Prostate gland (tissue), 2 donors: ENCODE measurements at regions of chr6 and their contacts with region 1.

Region 1: GRCh38 chr6:133923938-133924593 is 29.0 kb upstream of the TBPL1 start:
- DNase-seq: peak; percentile 76
- H3K4me3 ChIP-seq: no peak overlapping the region
- H3K27ac ChIP-seq: no peak overlapping the region
- H3K4me1 ChIP-seq: no peaks in the 10 kb centered on the region
- H3K27me3 ChIP-seq: no peaks in the 10 kb centered on the region
- CTCF ChIP-seq: peak; percentile 49 to 90 (median 82)
- POLR2A ChIP-seq: no peak

Region 2: DNA sequence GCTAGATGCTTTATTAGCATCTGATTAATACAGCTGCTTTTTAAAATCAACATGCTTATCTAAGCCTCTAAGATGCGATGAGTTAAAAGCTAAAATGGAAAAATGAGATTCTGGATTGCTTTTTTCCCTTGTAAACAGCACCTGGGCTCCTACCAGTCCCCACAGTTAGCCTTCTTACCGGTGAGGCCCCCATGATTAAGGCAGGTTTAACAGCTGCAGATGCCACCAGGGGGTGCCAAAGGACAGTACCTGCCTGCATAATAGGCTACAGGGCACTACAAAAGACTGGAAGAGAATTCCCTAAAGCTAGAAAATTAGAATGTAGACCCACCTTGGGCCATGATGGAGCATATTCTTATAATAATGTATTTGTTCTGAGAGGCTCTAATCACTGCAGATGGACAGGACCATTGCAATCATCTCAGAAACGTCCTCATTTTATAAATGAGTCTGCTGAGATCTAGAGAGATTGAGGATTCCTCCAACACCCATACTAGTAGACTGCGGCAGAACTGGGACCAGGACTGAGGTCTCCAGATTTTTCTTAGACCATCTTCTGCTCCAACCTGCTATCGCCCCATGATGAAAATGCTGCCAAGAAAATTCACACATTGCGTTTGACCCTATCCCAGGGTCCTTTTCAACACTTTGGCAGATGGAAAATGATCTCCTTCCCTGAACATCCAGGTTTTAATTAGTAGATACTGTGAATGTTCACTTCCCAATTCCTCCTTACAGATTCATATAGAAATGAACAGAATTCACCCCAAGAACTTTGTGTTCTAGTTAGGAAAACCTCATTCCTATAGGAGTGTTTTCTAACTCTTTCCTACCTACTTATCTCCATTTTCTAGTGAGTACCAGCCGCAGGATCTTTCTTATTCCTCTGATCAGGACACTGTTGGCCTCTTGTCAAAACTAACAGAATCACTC is 960.9 kb before region 1 on chr6:
- intact Hi-C with region 1: loop called (anchors 10 kb)
- DNase-seq: peak; percentile 51
- H3K4me3 ChIP-seq: no peak overlapping the region
- H3K27ac ChIP-seq: no peak overlapping the region
- H3K4me1 ChIP-seq: no peaks in the 10 kb centered on the region
- H3K27me3 ChIP-seq: no peaks in the 10 kb centered on the region
- CTCF ChIP-seq: peak in 3 of 4 experiments; percentile 63 to 71 (median 63)
- POLR2A ChIP-seq: no peak

Region 3: GRCh38 chr6:133568970-133569889 is 354.8 kb before region 1 on chr6:
- intact Hi-C with region 1: loop called (anchors 2 kb)
- DNase-seq: no peak
- H3K4me3 ChIP-seq: peak overlapping the region in 1 of 2 donors; percentile 7
- H3K27ac ChIP-seq: no peak overlapping the region
- H3K4me1 ChIP-seq: no peaks in the 10 kb centered on the region
- H3K27me3 ChIP-seq: no peaks in the 10 kb centered on the region
- CTCF ChIP-seq: peak; percentile 55 to 94 (median 84)
- POLR2A ChIP-seq: no peak

Region 4: DNA sequence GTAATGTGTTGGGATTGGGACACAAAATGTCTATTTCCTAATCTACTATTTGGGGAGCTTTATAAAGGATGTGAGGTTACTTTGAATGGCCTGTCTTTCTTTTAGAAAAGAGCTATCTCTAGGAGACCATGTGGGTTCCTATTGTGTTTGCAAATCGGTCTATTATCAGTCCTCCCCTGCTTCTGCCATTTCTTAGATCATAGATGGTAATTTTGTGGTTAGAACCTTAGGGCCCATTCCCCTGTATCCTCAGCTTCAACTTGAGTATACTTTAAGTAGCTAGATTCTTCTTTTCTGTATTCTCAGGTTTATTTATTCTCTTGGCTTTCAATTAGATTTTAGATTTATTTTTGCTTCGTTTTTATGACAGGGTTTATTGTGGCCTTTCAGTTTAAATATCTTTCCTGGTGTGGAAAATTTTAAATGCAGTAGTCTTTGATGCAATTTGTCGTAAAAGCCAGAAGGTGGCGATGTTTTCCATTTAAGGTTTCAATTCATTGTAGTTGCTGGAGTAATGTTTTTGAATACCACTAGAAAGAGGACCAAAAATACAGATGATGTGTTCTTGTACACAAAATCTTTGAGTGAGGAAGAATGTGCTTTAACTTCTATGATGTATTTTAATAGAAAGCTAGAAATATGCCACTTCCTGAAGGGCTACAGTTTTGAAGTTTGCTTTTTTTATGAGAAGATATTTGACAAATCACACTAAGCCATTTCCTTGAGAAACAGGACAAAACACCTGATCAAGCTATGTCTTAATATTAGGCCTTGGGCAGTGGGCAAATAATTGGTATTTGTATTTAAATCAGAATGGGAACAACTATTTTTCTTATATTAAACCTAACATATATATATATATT is 49.3 kb after region 1 on chr6:
- intact Hi-C with region 1: loop called (anchors 5 kb)
- DNase-seq: no peak
- H3K4me3 ChIP-seq: no peak overlapping the region
- H3K27ac ChIP-seq: peak overlapping the region; percentile 54 to 55
- H3K4me1 ChIP-seq: peaks cover 4% of the 10 kb centered on the region
- H3K27me3 ChIP-seq: no peaks in the 10 kb centered on the region
- CTCF ChIP-seq: peak; percentile 58 to 94 (median 90)
- POLR2A ChIP-seq: no peak

Region 5: GRCh38 chr6:134021396-134022122 is 97.5 kb after region 1 on chr6:
- intact Hi-C with region 1: no loop called
- DNase-seq: no peak
- H3K4me3 ChIP-seq: no peak overlapping the region
- H3K27ac ChIP-seq: peak overlapping the region; percentile 77 to 78
- H3K4me1 ChIP-seq: peaks cover 11% of the 10 kb centered on the region
- H3K27me3 ChIP-seq: no peaks in the 10 kb centered on the region
- CTCF ChIP-seq: no peak
- POLR2A ChIP-seq: no peak

Region 6: GRCh38 chr6:134063966-134064445 is 139.9 kb after region 1 on chr6:
- intact Hi-C with region 1: loop called (anchors 10 kb)
- DNase-seq: peak; percentile 63
- H3K4me3 ChIP-seq: no peak overlapping the region
- H3K27ac ChIP-seq: peak overlapping the region in 1 of 2 donors; percentile 34
- H3K4me1 ChIP-seq: no peaks in the 10 kb centered on the region
- H3K27me3 ChIP-seq: no peaks in the 10 kb centered on the region
- CTCF ChIP-seq: peak; percentile 32 to 87 (median 79)
- POLR2A ChIP-seq: no peak

Region 7: GRCh38 chr6:134097114-134097707 is 173.1 kb after region 1 on chr6:
- intact Hi-C with region 1: loop called (anchors 1 kb)
- DNase-seq: peak; percentile 51
- H3K4me3 ChIP-seq: no peak overlapping the region
- H3K27ac ChIP-seq: no peak overlapping the region
- H3K4me1 ChIP-seq: no peaks in the 10 kb centered on the region
- H3K27me3 ChIP-seq: no peaks in the 10 kb centered on the region
- CTCF ChIP-seq: peak; percentile 51 to 81 (median 74)
- POLR2A ChIP-seq: no peak